ENCODE measurements at regions of chr11 and their contacts with region 1.

Region 1: GRCh38 chr11:71448257-71449171 is at the start of gene DHCR7:
- DNase-seq: peak; percentile 80 to 95 (median 93)
- ATAC-seq: peak; percentile 70
- H3K4me3 ChIP-seq: peak within 1 kb of the TSS; percentile 77 to 98
- H3K4me3 Mint-ChIP-seq: peak within 1 kb of the TSS; percentile 93
- H3K27ac ChIP-seq: peak within 1 kb of the TSS; percentile 80 to 82
- H3K27ac Mint-ChIP-seq: peak within 1 kb of the TSS; percentile 90
- H3K4me1 ChIP-seq: peaks cover 32% of the 10 kb centered on the region
- H3K4me1 Mint-ChIP-seq: peaks cover 47% of the 10 kb centered on the region
- H3K27me3 ChIP-seq: no peaks in the 10 kb centered on the region
- H3K27me3 Mint-ChIP-seq: no peaks in the 10 kb centered on the region
- CTCF ChIP-seq: no peak
- total RNA-seq, gene DHCR7: 33.9 to 40.0 TPM

Region 2: DNA sequence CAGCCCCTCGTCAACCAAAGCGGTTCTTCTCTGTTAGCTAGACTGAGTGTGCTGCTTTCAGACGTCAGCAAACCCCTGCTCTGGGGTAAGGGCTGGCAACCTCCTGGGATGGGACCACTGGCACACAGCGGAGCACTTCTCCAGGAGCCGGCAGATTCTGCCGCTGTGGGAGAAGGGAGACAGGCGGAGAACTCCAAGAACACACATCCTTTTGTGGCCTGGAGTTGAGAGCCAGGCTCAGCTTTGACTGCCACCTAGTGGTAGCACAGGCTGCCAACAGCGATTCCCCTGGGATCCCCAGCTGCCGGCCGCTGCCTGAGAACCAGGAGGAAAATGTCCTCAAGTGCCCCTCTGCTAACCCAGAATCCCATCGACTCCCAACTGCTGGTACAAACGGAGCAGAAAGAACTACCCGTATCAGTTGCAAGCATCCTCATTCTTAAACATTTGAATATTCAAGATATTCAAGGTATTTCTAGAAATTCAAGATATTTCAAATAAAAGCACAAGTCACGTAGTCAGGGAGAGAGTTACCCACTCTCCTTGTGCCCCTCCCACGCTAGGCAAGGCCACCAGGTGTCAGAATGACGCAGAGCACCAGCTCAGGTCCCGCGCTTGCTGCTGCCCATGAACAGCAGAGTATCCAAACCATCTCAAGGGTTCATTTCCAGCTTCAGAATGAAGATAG is 1778.2 kb before region 1 on chr11:
- CTCF ChIA-PET with region 1: no interaction called
- POLR2A ChIA-PET with region 1: no interaction called
- intact Hi-C with region 1: loop called (anchors 5 kb)
- DNase-seq: peak; percentile 27 to 74 (median 61)
- ATAC-seq: peak; percentile 21
- H3K4me3 ChIP-seq: no peak overlapping the region
- H3K4me3 Mint-ChIP-seq: no peak overlapping the region
- H3K27ac ChIP-seq: no peak overlapping the region
- H3K27ac Mint-ChIP-seq: peak overlapping the region; percentile 62
- H3K4me1 ChIP-seq: peaks cover 23% of the 10 kb centered on the region
- H3K4me1 Mint-ChIP-seq: peaks cover 31% of the 10 kb centered on the region
- H3K27me3 ChIP-seq: no peaks in the 10 kb centered on the region
- H3K27me3 Mint-ChIP-seq: no peaks in the 10 kb centered on the region
- CTCF ChIP-seq: peak; percentile 74

Region 3: DNA sequence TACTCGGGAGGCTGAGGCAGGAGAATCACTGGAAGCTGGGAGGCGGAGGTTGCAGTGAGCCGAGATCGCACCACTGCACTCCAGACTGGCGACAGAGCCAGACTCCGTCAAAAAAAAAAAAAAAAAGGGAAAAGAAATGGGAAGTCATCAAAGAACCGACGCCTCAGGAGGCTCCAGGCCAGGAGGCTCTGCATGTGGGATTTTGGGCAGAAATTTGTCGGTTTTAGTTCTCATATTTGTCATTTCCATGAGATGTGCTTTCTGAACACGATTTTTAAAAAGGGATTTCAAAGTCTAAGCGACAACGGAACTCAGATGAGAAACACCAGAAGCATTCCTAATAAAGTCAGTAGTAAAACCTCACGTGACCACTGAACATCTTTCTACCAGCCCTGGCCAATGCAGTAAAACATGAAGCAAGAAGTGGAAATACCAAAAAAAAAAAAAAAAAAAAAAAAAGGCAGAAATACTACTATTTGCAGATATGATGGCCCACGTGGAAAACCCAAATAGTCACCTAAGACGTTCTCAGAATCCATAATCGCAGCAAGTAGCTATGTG is 1772.6 kb before region 1 on chr11:
- CTCF ChIA-PET with region 1: no interaction called
- POLR2A ChIA-PET with region 1: no interaction called
- intact Hi-C with region 1: loop called (anchors 5 kb)
- DNase-seq: no peak
- ATAC-seq: no peak
- H3K4me3 ChIP-seq: peak overlapping the region; percentile 68 to 100
- H3K4me3 Mint-ChIP-seq: peak overlapping the region; percentile 94
- H3K27ac ChIP-seq: no peak overlapping the region
- H3K27ac Mint-ChIP-seq: no peak overlapping the region
- H3K4me1 ChIP-seq: peaks cover 31% of the 10 kb centered on the region
- H3K4me1 Mint-ChIP-seq: peaks cover 26% of the 10 kb centered on the region
- H3K27me3 ChIP-seq: no peaks in the 10 kb centered on the region
- H3K27me3 Mint-ChIP-seq: peaks cover 2% of the 10 kb centered on the region
- CTCF ChIP-seq: no peak

Region 4: DNA sequence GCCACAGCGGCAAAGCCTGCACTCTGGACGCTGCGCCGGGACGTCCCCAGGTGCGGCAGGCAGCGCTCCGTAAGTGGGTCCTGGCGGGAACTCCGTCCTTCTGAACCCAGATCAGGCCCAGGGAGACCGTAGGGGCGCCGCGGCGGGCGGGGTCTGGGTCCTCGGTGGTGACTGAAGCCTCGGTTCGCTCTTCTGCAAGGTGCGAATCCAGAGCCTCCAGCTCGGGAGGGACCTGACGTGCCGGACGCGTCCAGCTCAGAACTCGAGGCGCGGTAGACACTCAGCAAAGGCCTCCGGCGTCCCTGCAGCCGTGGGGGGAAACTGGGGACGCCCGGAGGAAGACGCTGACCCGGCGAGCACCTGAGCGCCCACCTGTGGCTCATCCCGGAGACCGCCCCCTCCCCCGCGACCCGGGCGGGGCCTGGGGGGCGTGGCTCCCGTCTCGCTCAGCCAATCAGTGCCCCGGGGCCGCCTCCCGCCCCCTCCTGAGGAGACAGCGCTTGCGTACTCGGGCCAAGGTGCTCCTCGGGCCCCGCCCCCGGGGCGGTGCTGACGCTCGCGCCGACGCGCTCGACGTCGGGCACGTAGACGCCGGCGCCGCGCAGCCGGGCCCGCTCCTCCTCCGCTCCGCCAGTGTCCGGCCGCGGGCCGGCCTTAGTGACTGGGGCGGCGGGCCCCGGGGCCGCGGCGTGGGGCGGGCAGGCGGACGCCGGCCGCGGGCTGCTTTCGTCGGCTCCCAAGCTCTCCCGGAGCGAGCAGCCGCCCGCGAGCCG is 1178.2 kb before region 1 on chr11 and contains the start of gene PPFIA1:
- CTCF ChIA-PET with region 1: no interaction called
- POLR2A ChIA-PET with region 1: no interaction called
- intact Hi-C with region 1: loop called in 1 of 2 experiments (anchors 10 kb)
- DNase-seq: peak; percentile 89 to 98 (median 96)
- ATAC-seq: peak; percentile 96
- H3K4me3 ChIP-seq: peak within 1 kb of the TSS; percentile 88 to 90
- H3K4me3 Mint-ChIP-seq: peak within 1 kb of the TSS; percentile 89
- H3K27ac ChIP-seq: peak within 1 kb of the TSS; percentile 53 to 55
- H3K27ac Mint-ChIP-seq: peak within 1 kb of the TSS; percentile 84
- H3K4me1 ChIP-seq: peaks cover 10% of the 10 kb centered on the region
- H3K4me1 Mint-ChIP-seq: peaks cover 44% of the 10 kb centered on the region
- H3K27me3 ChIP-seq: peaks cover 0 to 6% of the 10 kb centered on the region in 2 experiments
- H3K27me3 Mint-ChIP-seq: peaks cover 13% of the 10 kb centered on the region
- CTCF ChIP-seq: peak; percentile 2
- total RNA-seq, gene PPFIA1: 36.3 to 40.4 TPM

Region 5: DNA sequence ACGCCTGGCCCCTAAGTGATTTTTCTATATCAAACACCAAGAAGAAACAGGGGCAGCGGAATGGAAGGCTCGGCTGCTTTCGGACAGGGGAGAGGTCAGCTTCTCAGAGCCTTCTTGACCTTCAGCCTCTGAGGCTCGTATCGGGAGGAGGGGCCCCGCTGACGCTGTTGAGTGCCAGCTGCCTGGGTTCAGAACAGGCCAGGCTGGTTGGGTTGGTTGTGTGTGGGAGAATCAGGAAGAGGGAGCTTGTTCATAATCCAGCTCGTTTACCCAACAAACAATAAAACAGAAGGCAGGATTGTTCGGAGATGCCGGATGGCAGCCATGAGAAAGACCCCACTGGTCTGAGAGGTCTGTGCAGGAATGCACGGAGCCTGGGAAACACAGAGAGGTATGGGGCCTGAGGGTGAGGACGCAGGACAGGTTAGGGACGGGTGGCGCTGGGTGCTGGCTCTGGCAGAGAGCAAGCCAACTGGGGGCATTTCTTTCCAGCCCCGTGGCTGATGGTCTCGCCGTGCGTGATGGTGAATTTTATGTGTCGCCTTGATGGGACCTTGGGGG is 164.6 kb before region 1 on chr11:
- CTCF ChIA-PET with region 1: no interaction called
- POLR2A ChIA-PET with region 1: no interaction called
- intact Hi-C with region 1: no loop called
- DNase-seq: peak in 1 of 9 experiments; percentile 29
- ATAC-seq: no peak
- H3K4me3 ChIP-seq: no peak overlapping the region
- H3K4me3 Mint-ChIP-seq: no peak overlapping the region
- H3K27ac ChIP-seq: no peak overlapping the region
- H3K27ac Mint-ChIP-seq: no peak overlapping the region
- H3K4me1 ChIP-seq: no peaks in the 10 kb centered on the region
- H3K4me1 Mint-ChIP-seq: no peaks in the 10 kb centered on the region
- H3K27me3 ChIP-seq: no peaks in the 10 kb centered on the region
- H3K27me3 Mint-ChIP-seq: peaks cover 10% of the 10 kb centered on the region
- CTCF ChIP-seq: no peak

Region 6: GRCh38 chr11:71787098-71787823 is 338.7 kb after region 1 on chr11:
- CTCF ChIA-PET with region 1: no interaction called
- POLR2A ChIA-PET with region 1: no interaction called
- intact Hi-C with region 1: loop called (anchors 5 to 10 kb)
- DNase-seq: peak; percentile 77 to 97 (median 90)
- ATAC-seq: peak; percentile 96
- H3K4me3 ChIP-seq: peak overlapping the region; percentile 84 to 96
- H3K4me3 Mint-ChIP-seq: peak overlapping the region; percentile 94
- H3K27ac ChIP-seq: peak overlapping the region; percentile 80 to 97
- H3K27ac Mint-ChIP-seq: peak overlapping the region; percentile 95
- H3K4me1 ChIP-seq: no peaks in the 10 kb centered on the region
- H3K4me1 Mint-ChIP-seq: peaks cover 6% of the 10 kb centered on the region
- H3K27me3 ChIP-seq: no peaks in the 10 kb centered on the region
- H3K27me3 Mint-ChIP-seq: no peaks in the 10 kb centered on the region
- CTCF ChIP-seq: no peak

Region 7: GRCh38 chr11:71928737-71929452 is 480.4 kb after region 1 on chr11 and contains the start of gene RNF121:
- CTCF ChIA-PET with region 1: no interaction called
- POLR2A ChIA-PET with region 1: no interaction called
- intact Hi-C with region 1: loop called in 1 of 2 experiments (anchors 5 kb)
- DNase-seq: peak; percentile 94 to 99 (median 97)
- ATAC-seq: peak; percentile 86
- H3K4me3 ChIP-seq: peak within 1 kb of the TSS; percentile 67 to 98
- H3K4me3 Mint-ChIP-seq: peak within 1 kb of the TSS; percentile 100
- H3K27ac ChIP-seq: peak within 1 kb of the TSS; percentile 90 to 96
- H3K27ac Mint-ChIP-seq: peak within 1 kb of the TSS; percentile 99
- H3K4me1 ChIP-seq: peaks cover 22% of the 10 kb centered on the region
- H3K4me1 Mint-ChIP-seq: peaks cover 57% of the 10 kb centered on the region
- H3K27me3 ChIP-seq: no peaks in the 10 kb centered on the region
- H3K27me3 Mint-ChIP-seq: no peaks in the 10 kb centered on the region
- CTCF ChIP-seq: no peak
- total RNA-seq, gene RNF121: 8.5 to 9.0 TPM